A673 (cell line): ENCODE measurements at regions of chr9 and their contacts with region 1.

Region 1: GRCh38 chr9:117927354-117927753 is 223.2 kb downstream of the TLR4 start:
- DNase-seq: no peak
- H3K4me3 ChIP-seq: no peak overlapping the region
- H3K27ac ChIP-seq: no peak overlapping the region
- H3K4me1 ChIP-seq: no peaks in the 10 kb centered on the region
- H3K27me3 ChIP-seq: no peaks in the 10 kb centered on the region
- CTCF ChIP-seq: no peak

Region 2: DNA sequence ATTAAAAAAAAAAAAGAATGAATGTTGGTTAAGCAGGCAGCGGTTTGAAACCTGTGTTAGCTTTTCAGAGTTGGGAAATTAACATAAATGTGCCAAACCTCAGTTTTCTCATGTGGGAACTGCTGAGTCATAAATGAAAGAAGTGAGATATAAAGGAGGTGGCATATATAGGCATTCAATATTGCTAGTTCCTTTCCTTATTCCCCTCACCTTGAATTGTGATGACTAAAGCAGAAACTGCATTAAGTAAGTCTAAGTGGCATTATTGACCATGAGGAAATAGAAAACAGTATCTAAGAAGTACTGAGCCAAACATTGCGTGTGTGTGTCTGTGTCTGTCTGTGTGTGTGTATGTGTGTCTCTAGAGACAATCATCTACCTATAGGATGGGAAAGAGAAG is 468.1 kb after region 1 on chr9:
- CTCF ChIA-PET with region 1: no interaction called
- POLR2A ChIA-PET with region 1: no interaction called
- intact Hi-C with region 1: no loop called
- DNase-seq: no peak
- H3K4me3 ChIP-seq: no peak overlapping the region
- H3K27ac ChIP-seq: no peak overlapping the region
- H3K4me1 ChIP-seq: no peaks in the 10 kb centered on the region
- H3K27me3 ChIP-seq: no peaks in the 10 kb centered on the region
- CTCF ChIP-seq: no peak

Region 3: DNA sequence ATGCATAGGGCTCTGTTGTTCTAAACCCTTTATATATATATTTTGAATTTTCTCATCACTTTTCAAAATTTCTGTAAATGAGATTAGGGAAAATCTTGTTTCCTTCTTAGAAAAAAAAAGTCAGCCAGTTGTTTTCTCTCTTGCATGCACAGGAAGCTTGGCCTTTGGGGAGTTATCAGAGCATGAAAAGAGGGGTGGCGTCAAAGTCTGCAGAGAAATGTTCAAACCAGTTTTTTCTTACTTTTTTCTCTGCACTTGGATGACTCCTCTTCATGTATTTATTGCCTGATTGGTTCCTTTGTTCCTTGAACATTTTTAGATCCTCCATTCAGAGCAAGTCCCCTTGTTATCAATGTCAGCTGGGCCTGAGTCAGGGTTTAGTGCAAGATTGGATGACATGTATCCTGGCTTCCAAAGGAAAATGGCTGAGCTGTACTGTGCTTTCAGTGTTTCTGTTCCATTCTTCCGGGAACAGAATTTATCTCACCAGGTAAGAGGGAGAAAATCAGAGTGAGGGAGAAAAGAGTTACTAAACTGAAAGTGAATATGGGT is 1834.5 kb after region 1 on chr9:
- CTCF ChIA-PET with region 1: no interaction called
- POLR2A ChIA-PET with region 1: interaction called, 11 read pairs
- intact Hi-C with region 1: no loop called
- DNase-seq: peak; percentile 13
- H3K4me3 ChIP-seq: no peak overlapping the region
- H3K27ac ChIP-seq: no peak overlapping the region
- H3K4me1 ChIP-seq: no peaks in the 10 kb centered on the region
- H3K27me3 ChIP-seq: no peaks in the 10 kb centered on the region
- CTCF ChIP-seq: no peak